Activated CD8-positive, alpha-beta memory T cell treated with anti-CD3 and anti-CD28 coated beads, Interleukin-2, amount 10 ng/mL, durations not matched to agents 7 days and 5 days (primary cell): ENCODE measurements at regions of chr1 and their contacts with region 1.

Region 1: GRCh38 chr1:205977402-205978014 is 25.7 kb downstream of the RAB7B start:
- DNase-seq: peak; percentile 80
- ATAC-seq: peak; percentile 78
- H3K4me3 Mint-ChIP-seq: no peak overlapping the region
- H3K27ac Mint-ChIP-seq: no peak overlapping the region
- H3K4me1 Mint-ChIP-seq: no peaks in the 10 kb centered on the region
- H3K27me3 Mint-ChIP-seq: no peaks in the 10 kb centered on the region

Region 2: GRCh38 chr1:205783904-205784303 is 193.6 kb before region 1 on chr1:
- CTCF ChIA-PET with region 1: interaction called, 128 read pairs
- DNase-seq: no peak
- ATAC-seq: no peak
- H3K4me3 Mint-ChIP-seq: no peak overlapping the region
- H3K27ac Mint-ChIP-seq: no peak overlapping the region
- H3K4me1 Mint-ChIP-seq: peaks cover 13% of the 10 kb centered on the region
- H3K27me3 Mint-ChIP-seq: no peaks in the 10 kb centered on the region

Region 3: DNA sequence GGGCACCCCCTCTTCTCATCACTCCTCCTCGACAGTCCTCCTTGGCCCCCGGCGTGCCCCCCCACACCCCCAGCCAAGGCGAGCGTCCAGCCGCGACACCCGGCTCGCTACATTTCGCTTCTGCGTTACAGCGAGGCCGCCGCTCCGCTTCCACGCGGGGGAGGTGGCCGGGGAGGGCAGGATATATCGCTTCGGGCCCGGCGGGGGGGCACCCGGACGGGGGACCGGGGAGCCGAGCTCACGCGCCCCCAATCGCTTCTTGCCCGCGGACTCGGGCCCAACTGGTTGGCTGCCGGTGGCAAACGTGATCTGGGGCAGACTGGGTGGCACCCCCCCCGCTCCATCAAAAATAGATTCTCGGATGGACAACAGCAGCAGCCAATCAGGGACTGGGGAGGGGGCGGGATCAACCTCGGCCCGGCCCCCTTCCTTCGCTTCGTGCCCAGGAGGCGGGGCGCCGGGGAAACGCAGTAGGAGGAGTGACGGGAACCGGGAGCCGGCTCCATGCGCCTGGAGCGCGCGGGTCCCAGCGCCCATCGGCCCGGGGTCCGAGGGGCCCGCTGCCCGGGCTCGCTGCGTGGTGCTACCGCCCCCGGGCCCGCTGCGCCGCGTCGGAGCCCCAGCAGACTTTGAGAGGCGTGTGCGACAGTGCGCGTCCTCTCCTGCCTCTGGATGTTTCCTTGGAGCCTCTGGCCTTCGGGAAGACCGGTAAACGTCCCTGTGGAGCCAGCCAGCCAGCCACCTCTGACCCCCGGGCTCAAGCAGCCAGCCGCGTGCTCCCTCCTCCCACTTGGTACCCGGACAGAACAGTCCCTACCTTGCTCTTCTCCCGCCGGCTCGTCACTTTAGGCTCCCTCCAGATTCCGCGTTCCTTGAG is 164.4 kb before region 1 on chr1 and contains the start of gene SLC41A1:
- CTCF ChIA-PET with region 1: interaction called, 11 read pairs
- DNase-seq: peak; percentile 93
- ATAC-seq: peak; percentile 96
- H3K4me3 Mint-ChIP-seq: peak within 1 kb of the TSS; percentile 80
- H3K27ac Mint-ChIP-seq: peak within 1 kb of the TSS; percentile 75
- H3K4me1 Mint-ChIP-seq: peaks cover 23% of the 10 kb centered on the region
- H3K27me3 Mint-ChIP-seq: peaks cover 14% of the 10 kb centered on the region
- total RNA-seq, gene SLC41A1: 13.3 to 16.7 TPM

Region 4: GRCh38 chr1:205919026-205919746 is 58.3 kb before region 1 on chr1:
- CTCF ChIA-PET with region 1: interaction called, 129 read pairs
- DNase-seq: peak; percentile 78
- ATAC-seq: peak; percentile 81
- H3K4me3 Mint-ChIP-seq: no peak overlapping the region
- H3K27ac Mint-ChIP-seq: no peak overlapping the region
- H3K4me1 Mint-ChIP-seq: peaks cover 6% of the 10 kb centered on the region
- H3K27me3 Mint-ChIP-seq: peaks cover 3% of the 10 kb centered on the region

Region 5: GRCh38 chr1:205961405-205961804 is 16.1 kb before region 1 on chr1:
- CTCF ChIA-PET with region 1: interaction called, 25 read pairs
- DNase-seq: no peak
- ATAC-seq: peak; percentile 30
- H3K4me3 Mint-ChIP-seq: no peak overlapping the region
- H3K27ac Mint-ChIP-seq: no peak overlapping the region
- H3K4me1 Mint-ChIP-seq: peaks cover 6% of the 10 kb centered on the region
- H3K27me3 Mint-ChIP-seq: peaks cover 24% of the 10 kb centered on the region

Region 6: DNA sequence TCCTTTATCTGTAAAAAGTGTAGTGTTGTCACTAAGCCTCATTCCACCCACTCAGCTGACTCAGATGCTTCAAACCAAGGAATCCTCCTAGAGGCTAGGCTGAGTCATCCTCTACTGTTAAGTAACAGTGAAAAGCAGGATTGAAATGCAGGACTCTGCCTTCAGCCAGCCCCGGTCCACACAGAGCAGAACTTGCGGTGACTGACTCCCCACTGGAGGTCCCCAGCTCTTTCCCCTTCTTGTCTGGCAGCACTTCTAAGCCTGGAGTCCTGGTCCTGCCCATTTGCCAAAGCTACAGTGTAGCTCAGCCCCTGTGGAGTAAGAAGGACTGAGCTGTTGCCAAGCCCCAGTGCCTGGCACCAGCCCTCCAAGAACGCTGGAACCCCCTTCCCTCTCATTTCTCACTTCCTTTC is 24.0 kb after region 1 on chr1:
- CTCF ChIA-PET with region 1: interaction called, 12 read pairs
- DNase-seq: no peak
- ATAC-seq: no peak
- H3K4me3 Mint-ChIP-seq: no peak overlapping the region
- H3K27ac Mint-ChIP-seq: no peak overlapping the region
- H3K4me1 Mint-ChIP-seq: peaks cover 9% of the 10 kb centered on the region
- H3K27me3 Mint-ChIP-seq: peaks cover 12% of the 10 kb centered on the region

Region 7: DNA sequence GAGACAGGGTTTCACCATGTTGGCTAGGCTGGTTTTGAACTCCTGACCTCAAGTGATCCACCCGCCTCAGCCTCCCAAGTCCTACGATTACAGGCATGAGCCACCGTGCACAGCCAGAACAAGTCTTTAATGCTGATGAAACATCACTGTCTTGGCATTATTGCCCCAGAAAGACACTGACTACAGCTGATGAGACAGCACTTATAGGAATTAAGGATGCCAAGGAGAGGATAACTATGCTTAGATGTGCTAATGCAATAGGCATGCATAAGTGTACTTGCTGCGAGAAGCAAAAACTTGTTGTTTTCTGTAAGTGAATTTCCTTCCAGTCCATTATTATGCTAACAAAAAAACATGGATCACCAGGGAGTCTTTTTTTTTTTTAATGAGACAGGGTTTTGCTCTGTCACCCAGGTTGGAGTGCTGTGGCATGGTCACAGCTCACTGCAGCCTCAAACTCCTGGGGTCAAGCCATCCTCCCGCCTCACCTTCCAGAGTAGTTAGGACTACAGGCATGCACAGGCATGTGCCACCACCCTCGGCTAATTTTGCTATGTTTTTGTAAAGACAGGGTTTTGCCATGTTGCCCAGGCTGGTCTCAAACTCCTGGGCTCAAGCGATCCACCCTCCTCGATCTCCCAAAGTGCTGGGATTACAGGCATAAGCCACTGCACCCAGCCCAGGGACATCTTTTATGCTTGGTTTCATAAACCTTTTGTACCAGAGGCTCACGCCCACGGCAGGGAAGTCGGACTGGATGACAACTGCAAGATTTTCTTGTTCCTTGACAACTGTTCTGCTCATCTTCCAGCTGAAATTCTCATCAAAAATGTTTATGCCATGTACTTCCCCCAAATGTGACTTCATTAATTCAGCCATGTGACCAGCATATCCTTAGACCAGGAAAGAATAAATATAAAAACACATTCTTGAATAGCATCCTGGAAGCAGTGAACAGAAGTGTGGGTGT is 98.6 kb after region 1 on chr1:
- CTCF ChIA-PET with region 1: no interaction called
- DNase-seq: no peak
- ATAC-seq: no peak
- H3K4me3 Mint-ChIP-seq: no peak overlapping the region
- H3K27ac Mint-ChIP-seq: no peak overlapping the region
- H3K4me1 Mint-ChIP-seq: peaks cover 10% of the 10 kb centered on the region
- H3K27me3 Mint-ChIP-seq: peaks cover 41% of the 10 kb centered on the region